PC-3 (cell line): ENCODE measurements at regions of chr6 and their contacts with region 1.

Region 1: DNA sequence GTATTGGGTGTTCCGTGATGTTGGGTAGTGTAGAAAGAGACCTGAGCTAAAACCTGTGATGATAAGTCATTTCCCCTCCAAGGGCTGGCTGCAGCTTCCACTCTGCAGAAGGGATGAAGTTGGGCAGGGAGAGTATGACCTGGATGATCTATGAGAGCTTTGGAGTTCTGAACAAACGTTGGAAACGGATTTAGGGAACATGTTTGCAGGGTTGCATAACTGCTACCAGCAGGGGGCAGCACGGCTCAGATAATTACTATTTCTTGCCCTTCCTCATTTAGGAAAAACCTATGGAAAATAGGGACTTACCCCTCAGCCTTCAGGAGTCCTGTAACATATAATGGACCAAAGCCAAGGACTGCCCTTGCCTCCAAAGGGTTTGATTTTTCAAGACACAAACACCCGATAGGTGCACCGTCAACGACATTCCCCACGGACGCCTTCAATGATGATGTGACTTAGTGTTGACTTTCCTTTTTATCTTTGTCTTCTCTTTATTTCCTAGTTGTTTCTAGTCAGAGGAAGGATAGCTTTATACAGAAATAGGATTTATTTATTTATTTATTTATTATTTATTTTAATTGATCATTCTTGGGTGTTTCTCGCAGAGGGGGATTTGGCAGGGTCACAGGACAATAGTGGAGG is 164.9 kb upstream of the SASH1 start:
- DNase-seq: peak; percentile 74
- ATAC-seq: peak; percentile 51; the same call in 1 of the 2 replicates
- H3K4me3 ChIP-seq: no peak overlapping the region
- H3K27ac ChIP-seq: no peak overlapping the region
- H3K4me1 ChIP-seq: no peaks in the 10 kb centered on the region
- H3K27me3 ChIP-seq: no peaks in the 10 kb centered on the region
- CTCF ChIP-seq: peak; percentile 74

Region 2: GRCh38 chr6:148064406-148065134 is 113.1 kb before region 1 on chr6:
- CTCF ChIA-PET with region 1: no interaction called
- POLR2A ChIA-PET with region 1: no interaction called
- intact Hi-C with region 1: no loop called
- DNase-seq: peak; percentile 11
- ATAC-seq: no peak
- H3K4me3 ChIP-seq: no peak overlapping the region
- H3K27ac ChIP-seq: no peak overlapping the region
- H3K4me1 ChIP-seq: no peaks in the 10 kb centered on the region
- H3K27me3 ChIP-seq: no peaks in the 10 kb centered on the region
- CTCF ChIP-seq: no peak

Region 3: GRCh38 chr6:148192310-148192709 is 14.6 kb after region 1 on chr6:
- CTCF ChIA-PET with region 1: interaction called, 18 read pairs
- POLR2A ChIA-PET with region 1: no interaction called
- intact Hi-C with region 1: no loop called
- DNase-seq: peak; percentile 76
- ATAC-seq: peak; percentile 80
- H3K4me3 ChIP-seq: peak overlapping the region; percentile 58
- H3K27ac ChIP-seq: peak overlapping the region; percentile 89
- H3K4me1 ChIP-seq: peaks cover 41% of the 10 kb centered on the region
- H3K27me3 ChIP-seq: no peaks in the 10 kb centered on the region
- CTCF ChIP-seq: no peak

Region 4: GRCh38 chr6:148464319-148465010 is 286.8 kb after region 1 on chr6:
- CTCF ChIA-PET with region 1: no interaction called
- POLR2A ChIA-PET with region 1: no interaction called
- intact Hi-C with region 1: loop called (anchors 1 kb)
- DNase-seq: peak; percentile 79
- ATAC-seq: peak; percentile 70
- H3K4me3 ChIP-seq: no peak overlapping the region
- H3K27ac ChIP-seq: no peak overlapping the region
- H3K4me1 ChIP-seq: peaks cover 3% of the 10 kb centered on the region; the same call in 1 of the 2 replicates
- H3K27me3 ChIP-seq: no peaks in the 10 kb centered on the region
- CTCF ChIP-seq: peak; percentile 91